Gastrocnemius medialis (tissue), 4 donors: ENCODE measurements at regions of chr18 and their contacts with region 1.

Region 1: GRCh38 chr18:45324495-45325113 is 290.7 kb upstream of the SLC14A2 start:
- DNase-seq: peak; percentile 88 to 97
- ATAC-seq: peak; percentile 75 to 77
- H3K4me3 ChIP-seq: peak overlapping the region; percentile 11 to 27 (median 20)
- H3K27ac ChIP-seq: peak overlapping the region; percentile 82 to 92 (median 90)
- H3K4me1 ChIP-seq: peaks cover 85% of the 10 kb centered on the region in 2 donors
- H3K27me3 ChIP-seq: no peaks in the 10 kb centered on the region
- CTCF ChIP-seq: peak in 1 of 5 experiments; percentile 12
- POLR2A ChIP-seq: peak in 1 of 2 donors; percentile 5

Region 2: GRCh38 chr18:44696892-44697291 is 627.7 kb before region 1 on chr18:
- in situ Hi-C with region 1: no loop called
- intact Hi-C with region 1: loop called (anchors 5 kb)
- DNase-seq: peak; percentile 36 to 69
- ATAC-seq: peak; percentile 77 to 86
- H3K4me3 ChIP-seq: peak overlapping the region; percentile 42 to 51 (median 48)
- H3K27ac ChIP-seq: peak overlapping the region; percentile 71 to 81 (median 80)
- H3K4me1 ChIP-seq: peaks cover 76 to 77% of the 10 kb centered on the region in 2 donors
- H3K27me3 ChIP-seq: no peaks in the 10 kb centered on the region
- CTCF ChIP-seq: no peak
- POLR2A ChIP-seq: no peak

Region 3: DNA sequence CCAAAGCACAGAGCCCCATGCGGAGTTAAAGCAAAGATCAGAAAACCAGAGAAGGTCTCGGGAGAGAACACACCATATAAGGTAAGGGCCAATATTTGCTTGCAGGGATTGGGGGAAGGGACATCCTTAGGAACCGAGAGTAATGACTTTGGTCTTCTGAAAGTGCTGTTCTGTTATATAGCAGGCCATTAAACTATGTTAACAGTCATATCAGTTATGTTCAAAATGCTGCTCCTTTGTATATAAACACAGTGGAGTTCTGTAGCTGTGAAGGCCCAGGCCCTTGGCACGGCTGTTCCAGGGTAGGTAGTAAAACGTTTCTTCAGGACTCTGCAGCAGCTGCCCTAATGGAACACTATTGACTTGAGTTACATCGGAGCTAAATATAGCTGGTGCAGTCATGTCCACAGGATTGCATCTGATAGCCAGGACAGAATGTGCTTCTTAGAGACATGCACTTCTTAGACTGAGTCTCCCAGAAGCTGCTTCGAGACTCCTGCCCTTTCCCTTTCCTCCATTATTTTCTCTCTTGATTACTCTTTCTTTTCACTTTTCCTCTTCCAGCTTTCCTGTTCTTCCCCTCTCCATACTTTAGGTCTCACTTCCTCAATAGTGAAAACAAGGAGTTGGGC is 521.5 kb before region 1 on chr18:
- in situ Hi-C with region 1: loop called in 1 of 4 experiments (anchors 10 kb)
- intact Hi-C with region 1: loop called (anchors 5 kb)
- DNase-seq: peak; percentile 87 to 91
- ATAC-seq: peak; percentile 95 to 99
- H3K4me3 ChIP-seq: peak overlapping the region; percentile 15 to 27 (median 18)
- H3K27ac ChIP-seq: peak overlapping the region; percentile 92 to 98 (median 94)
- H3K4me1 ChIP-seq: peaks cover 73 to 86% of the 10 kb centered on the region in 2 donors
- H3K27me3 ChIP-seq: no peaks in the 10 kb centered on the region
- CTCF ChIP-seq: no peak
- POLR2A ChIP-seq: peak; percentile 74 to 86

Region 4: DNA sequence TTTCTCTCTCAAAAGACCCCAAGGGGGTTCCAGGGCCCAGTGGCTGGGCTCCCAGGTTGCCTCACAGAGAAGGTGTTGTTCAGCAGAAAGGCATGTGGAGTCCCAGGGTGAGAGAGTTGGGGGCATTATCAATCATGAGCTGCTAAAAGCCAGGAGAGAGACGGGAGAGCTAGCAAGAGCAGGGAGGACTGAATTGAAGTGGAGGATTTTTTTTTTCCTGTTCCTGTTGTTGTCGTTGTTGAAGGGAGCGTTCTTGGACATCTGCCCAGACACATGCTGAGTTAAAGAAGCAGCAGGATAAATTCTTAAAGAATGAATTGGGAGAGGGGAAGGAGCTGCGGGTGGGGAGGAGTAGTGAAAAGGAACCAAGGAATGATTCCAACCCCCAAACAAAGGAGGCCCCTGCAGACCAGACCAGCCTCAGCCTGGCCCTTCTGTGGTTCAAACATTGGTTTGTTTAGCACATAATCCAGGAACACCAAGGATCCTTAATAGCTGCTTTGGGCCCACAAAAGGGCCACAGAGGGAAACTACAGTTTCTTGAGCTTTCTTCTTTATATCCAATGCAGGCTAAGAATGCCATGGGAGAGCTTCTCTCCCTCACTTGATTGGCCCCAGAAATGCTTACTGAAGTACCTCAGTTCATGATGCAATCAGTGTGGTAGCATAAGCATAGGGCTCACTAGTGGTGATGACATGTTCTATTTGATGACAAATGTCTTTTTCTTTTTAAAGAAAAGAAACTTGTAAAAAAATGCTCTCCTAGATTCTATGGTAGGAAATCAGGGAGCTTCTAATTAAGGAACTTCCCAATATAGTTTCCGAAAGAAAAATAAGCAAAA is 498.0 kb before region 1 on chr18:
- in situ Hi-C with region 1: no loop called
- intact Hi-C with region 1: loop called (anchors 5 kb)
- DNase-seq: peak; percentile 69 to 80
- ATAC-seq: peak; percentile 81 to 90
- H3K4me3 ChIP-seq: peak overlapping the region in 3 of 4 donors; percentile 0 to 10 (median 6)
- H3K27ac ChIP-seq: peak overlapping the region; percentile 69 to 85 (median 74)
- H3K4me1 ChIP-seq: peaks cover 52 to 57% of the 10 kb centered on the region in 2 donors
- H3K27me3 ChIP-seq: no peaks in the 10 kb centered on the region
- CTCF ChIP-seq: no peak
- POLR2A ChIP-seq: no peak

Region 5: DNA sequence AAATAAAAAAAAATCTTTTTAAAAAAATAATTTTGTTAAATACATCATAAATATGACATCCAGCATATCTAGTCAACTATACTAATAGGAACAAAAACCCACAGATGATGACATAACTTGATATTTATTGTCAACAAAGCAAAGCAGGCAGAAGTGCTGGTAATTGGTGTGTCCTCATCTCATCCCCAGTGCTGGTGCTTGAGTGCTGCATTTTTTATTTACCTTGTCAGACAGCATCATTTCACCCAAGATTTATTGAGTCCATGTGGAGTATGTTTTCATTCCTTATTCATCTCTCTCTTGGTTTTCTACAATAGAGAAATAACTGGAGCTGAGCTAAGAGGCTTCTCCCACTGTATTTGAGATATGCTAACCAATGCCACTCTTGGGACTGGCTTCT is 99.1 kb after region 1 on chr18:
- in situ Hi-C with region 1: no loop called
- intact Hi-C with region 1: no loop called
- DNase-seq: no peak
- ATAC-seq: no peak
- H3K4me3 ChIP-seq: no peak overlapping the region
- H3K27ac ChIP-seq: no peak overlapping the region
- H3K4me1 ChIP-seq: no peaks in the 10 kb centered on the region
- H3K27me3 ChIP-seq: no peaks in the 10 kb centered on the region
- CTCF ChIP-seq: no peak
- POLR2A ChIP-seq: no peak

Region 6: DNA sequence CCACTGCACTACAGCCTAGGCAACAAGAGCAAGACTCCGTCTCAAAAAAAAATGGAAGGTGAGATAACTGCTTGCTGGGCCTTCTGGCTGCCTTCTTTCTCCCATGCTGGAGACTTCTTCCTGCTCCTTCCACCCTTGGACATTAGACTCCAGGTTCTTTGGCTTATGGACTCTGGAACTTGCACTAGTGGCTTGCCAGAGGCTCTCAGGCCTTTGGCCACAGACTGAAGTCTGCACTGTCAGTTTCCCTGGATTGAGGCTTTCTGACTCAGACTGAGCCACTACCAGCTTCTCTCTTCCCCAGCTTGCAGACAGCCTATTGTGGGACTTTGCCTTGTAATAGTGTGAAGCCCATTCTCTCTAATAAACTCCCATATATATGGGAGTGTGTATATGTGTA is 172.1 kb after region 1 on chr18:
- in situ Hi-C with region 1: no loop called
- intact Hi-C with region 1: loop called (anchors 5 kb)
- DNase-seq: no peak
- ATAC-seq: no peak
- H3K4me3 ChIP-seq: no peak overlapping the region
- H3K27ac ChIP-seq: no peak overlapping the region
- H3K4me1 ChIP-seq: peaks cover 0 to 7% of the 10 kb centered on the region in 2 donors
- H3K27me3 ChIP-seq: no peaks in the 10 kb centered on the region
- CTCF ChIP-seq: no peak
- POLR2A ChIP-seq: no peak

Region 7: DNA sequence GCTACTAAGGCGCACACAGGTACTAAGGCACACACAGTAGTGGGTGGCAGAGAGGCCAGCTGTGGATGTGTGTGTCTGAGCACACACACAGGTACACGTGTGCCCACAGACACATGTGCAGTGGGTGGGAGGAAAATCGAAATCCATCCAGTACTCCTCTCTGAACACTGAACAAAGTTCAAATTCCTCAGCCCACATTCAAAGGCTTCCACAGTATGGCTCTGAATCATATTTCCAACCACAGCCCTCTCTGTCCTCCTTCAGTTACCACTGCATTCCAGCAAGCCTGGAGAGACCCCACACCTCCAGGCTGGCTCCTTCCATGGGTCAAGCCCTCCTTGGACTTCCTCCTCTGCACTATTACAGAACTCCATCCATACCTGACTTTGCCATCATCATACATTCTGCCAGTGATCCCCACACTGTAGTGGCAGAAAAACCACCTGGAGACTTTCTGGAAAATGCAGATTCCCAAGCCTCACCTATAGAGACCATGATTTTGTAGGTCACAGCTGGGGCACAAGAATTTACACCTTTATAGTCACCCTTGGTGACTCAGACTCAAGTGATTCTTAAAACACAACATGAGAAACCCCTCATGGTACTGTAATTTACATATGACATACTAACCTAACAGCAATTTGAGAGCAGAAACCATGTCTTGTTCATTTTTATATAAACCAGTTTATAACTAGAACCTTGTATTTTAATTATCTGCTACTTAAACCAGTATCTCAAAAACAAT is 611.2 kb after region 1 on chr18:
- in situ Hi-C with region 1: no loop called
- intact Hi-C with region 1: no loop called
- DNase-seq: no peak
- ATAC-seq: no peak
- H3K4me3 ChIP-seq: no peak overlapping the region
- H3K27ac ChIP-seq: no peak overlapping the region
- H3K4me1 ChIP-seq: no peaks in the 10 kb centered on the region
- H3K27me3 ChIP-seq: no peaks in the 10 kb centered on the region
- CTCF ChIP-seq: no peak
- POLR2A ChIP-seq: no peak